ENCODE measurements at regions of chr22 and their contacts with region 1.

Region 1: GRCh38 chr22:23281406-23282088 is 101.2 kb downstream of the BCR start:
- DNase-seq: peak; percentile 59 to 93
- H3K4me3 ChIP-seq: peak overlapping the region in 1 of 2 donors; percentile 20
- H3K27ac ChIP-seq: peak overlapping the region; percentile 86 to 93
- H3K4me1 ChIP-seq: peaks cover 7 to 44% of the 10 kb centered on the region in 2 donors
- H3K27me3 ChIP-seq: no peaks in the 10 kb centered on the region
- CTCF ChIP-seq: peak; percentile 95 to 98 (median 97)

Region 2: DNA sequence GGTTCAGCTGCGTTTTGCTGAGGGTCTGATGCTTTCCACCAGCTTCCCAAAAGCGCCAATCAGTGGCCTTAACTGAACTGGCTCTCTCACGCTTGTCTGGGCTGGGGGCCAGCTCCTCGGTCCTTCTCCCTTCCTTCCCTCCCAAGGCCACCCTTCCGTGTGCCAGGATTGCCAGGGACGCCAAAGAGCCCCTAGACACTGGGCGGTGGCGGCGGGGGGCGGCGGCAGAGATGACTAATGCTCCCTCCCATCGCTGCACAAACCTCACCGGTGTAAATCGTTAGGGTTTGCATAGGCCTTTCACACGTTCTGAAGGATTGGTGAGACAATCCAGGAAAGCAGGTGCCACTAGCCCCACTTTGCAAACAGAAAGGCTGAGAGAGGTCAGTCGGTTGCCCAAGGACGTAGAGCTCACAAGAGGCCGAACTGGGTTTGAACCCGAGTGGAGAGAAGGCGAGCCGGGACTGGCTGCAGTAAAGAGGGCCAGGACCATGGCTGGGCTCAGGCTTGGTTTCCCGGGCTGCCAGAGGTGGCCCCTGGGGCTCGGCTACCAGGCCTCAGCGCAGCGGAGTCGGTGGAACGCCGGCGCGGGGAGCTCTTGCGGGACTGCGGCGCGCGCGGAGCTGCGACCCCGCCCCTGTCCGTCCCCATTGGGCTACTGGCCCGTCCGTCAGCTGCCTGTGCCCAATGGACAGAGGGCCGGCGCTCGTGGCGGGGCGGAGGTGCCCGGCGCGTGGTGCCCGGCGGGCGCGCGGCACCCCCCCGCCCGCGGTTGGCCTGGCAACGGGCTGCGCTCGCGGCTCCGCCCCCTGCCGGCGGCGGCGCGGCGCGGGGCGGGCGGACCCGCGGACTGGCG is 211.8 kb before region 1 on chr22:
- intact Hi-C with region 1: loop called (anchors 10 kb)
- DNase-seq: peak; percentile 72 to 94
- H3K4me3 ChIP-seq: peak overlapping the region; percentile 60 to 74
- H3K27ac ChIP-seq: no peak overlapping the region
- H3K4me1 ChIP-seq: peaks cover 4 to 10% of the 10 kb centered on the region in 2 donors
- H3K27me3 ChIP-seq: no peaks in the 10 kb centered on the region
- CTCF ChIP-seq: no peak

Region 3: DNA sequence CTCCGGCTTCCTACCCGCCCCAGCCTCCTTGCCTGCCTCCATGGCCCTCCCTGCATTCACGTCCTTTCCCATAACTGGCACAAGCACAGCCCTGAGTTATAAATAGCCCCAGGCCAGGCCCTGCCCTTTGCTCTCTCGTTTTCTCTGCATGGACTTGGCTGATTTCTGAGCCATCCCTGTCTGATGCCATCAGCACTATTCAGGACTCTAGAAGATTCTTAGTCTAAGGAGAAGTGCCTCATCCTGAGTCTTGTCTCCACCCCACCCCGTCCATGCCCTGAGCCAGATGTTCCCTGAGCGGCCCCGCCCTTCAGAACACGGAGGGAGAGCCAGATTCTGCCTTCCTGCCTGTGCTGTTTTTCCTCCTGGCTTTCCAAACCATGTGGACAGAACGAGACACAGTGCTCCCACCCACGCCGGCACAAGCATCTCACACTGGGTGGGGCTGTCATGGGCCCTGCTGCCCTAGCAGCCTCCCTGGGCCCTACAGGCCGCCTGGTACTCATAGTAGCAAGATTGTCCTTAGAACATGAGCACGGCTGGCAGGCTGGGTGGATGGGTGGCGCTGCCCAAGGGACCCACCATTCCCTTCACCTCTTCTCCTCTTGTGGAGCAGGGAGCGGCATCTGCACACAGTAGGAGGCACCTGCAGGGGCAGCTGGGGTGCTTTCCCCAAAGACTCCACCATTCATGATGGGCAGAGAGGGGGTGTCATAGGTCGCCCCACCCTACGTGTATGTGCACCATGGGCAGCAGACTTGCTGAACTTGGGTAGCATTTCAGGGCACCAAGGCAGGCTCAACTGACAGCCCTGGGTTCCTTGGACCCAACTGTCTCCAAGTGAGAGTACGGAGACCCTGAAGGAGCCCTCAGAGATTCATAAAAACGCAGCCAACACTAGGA is 24.3 kb before region 1 on chr22:
- intact Hi-C with region 1: loop called (anchors 2 kb)
- DNase-seq: peak; percentile 39 to 92
- H3K4me3 ChIP-seq: no peak overlapping the region
- H3K27ac ChIP-seq: peak overlapping the region; percentile 82 to 90
- H3K4me1 ChIP-seq: peaks cover 12 to 35% of the 10 kb centered on the region in 2 donors
- H3K27me3 ChIP-seq: no peaks in the 10 kb centered on the region
- CTCF ChIP-seq: no peak

Region 4: DNA sequence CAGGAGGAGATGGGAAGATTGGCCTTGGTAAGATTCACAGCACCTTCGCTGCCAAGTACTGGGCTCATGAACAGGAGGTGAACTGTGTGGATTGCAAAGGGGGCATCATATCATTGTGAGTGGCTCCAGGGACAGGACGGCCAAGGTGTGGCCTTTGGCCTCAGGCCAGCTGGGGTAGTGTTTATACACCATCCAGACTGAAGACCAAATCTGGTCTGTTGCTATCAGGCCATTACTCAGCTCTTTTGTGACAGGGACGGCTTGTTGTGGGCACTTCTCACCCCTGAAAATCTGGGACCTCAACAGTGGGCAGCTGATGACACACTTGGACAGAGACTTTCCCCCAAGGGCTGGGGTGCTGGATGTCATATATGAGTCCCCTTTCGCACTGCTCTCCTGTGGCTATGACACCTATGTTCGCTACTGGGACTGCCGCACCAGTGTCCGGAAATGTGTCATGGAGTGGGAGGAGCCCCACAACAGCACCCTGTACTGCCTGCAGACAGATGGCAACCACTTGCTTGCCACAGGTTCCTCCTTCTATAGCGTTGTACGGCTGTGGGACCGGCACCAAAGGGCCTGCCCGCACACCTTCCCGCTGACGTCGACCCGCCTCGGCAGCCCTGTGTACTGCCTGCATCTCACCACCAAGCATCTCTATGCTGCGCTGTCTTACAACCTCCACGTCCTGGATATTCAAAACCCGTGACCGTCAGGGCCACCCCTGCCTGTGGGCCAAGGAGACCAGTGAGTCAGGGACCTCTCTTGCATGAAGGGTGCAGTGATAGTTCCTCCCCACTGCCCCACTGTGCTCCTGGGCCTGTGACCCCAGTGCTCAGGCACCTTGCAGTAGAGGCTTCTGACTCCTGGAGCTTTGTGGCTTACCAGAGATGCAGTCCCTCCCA is 17.6 kb before region 1 on chr22:
- intact Hi-C with region 1: loop called (anchors 2 kb)
- DNase-seq: no peak
- H3K4me3 ChIP-seq: no peak overlapping the region
- H3K27ac ChIP-seq: peak overlapping the region; percentile 65 to 78
- H3K4me1 ChIP-seq: peaks cover 0 to 19% of the 10 kb centered on the region in 2 donors
- H3K27me3 ChIP-seq: no peaks in the 10 kb centered on the region
- CTCF ChIP-seq: no peak

Region 5: DNA sequence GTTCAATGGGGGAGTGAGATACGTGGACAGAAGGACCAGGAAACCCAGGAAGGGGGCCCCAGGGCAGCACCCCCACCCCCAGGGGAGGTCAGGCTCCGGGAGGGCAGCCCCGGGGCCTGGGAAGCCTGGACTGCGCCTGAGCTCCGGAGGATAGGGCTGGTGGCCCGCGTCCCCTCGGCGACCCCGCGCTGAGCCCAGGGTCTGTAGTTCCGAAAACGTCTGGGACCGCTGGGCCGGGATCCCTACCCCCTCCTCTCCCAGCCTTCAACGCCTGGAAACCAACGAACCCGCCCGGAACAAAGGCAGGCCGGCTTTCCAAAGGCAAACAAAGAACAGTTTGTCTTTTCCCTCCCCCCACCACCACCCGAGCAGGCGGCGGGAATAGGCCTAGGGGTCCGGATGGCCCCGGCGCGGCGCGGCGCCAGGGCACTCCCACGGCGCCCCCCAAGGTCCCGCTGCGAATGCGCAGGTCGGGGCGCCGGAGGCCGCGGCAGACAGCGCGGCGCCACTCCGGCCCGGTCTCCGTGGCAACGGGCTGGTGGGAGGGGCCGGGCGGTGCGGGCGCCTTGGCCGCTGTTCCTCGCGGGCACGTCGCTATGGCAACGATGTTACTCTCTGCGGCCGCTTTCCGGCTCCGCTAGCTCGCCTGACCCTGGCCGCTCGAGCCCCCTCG is 240.0 kb after region 1 on chr22:
- intact Hi-C with region 1: loop called (anchors 10 kb)
- DNase-seq: peak; percentile 47 to 94
- H3K4me3 ChIP-seq: peak overlapping the region; percentile 51 to 64
- H3K27ac ChIP-seq: peak overlapping the region; percentile 91 to 96
- H3K4me1 ChIP-seq: peaks cover 12 to 17% of the 10 kb centered on the region in 2 donors
- H3K27me3 ChIP-seq: no peaks in the 10 kb centered on the region
- CTCF ChIP-seq: peak in 1 of 3 experiments; percentile 24

Measured in ascending aorta (tissue), 2 donors.